Heart left ventricle (tissue), 16 donors: ENCODE measurements at regions of chr18 and their contacts with region 1.

Region 1: DNA sequence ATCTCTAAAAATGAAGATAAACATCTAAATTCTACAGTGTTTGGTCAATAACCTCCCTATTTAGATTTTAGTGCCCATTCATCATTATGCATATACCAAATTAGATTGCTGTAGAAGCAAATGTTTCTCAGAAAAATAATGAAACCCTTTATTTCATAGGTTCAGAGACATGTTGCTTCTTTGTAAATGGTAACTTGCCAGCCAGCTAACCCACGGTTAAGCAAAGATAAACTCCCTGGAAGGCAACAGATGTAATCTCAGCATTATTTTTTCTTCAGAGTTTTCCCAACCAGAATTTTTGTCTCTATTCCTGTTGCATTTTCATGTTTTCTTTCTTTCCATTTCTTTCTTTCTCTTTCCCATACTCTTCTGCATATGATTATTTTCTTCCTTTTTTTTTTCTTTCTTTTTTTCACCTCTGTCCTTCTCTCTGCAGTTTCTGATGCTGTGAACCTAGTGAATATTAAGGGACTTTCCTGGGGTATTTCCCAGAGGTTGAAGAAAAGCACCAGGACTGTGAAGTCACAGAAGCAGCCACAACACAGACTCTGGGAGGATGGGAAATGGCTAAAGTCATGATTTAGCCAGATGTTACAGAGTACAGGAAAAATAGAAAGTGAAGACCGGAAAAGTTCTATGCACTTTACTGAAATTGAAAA is 50.0 kb upstream of the DSG1 start:
- DNase-seq: no peak
- ATAC-seq: no peak
- H3K4me3 ChIP-seq: no peak overlapping the region
- H3K27ac ChIP-seq: no peak overlapping the region
- H3K4me1 ChIP-seq: peaks cover 0 to 18% (median 8%) of the 10 kb centered on the region in 12 donors
- H3K27me3 ChIP-seq: no peaks in the 10 kb centered on the region
- CTCF ChIP-seq: no peak
- POLR2A ChIP-seq: no peak

Region 2: GRCh38 chr18:31399306-31400032 is 131.5 kb after region 1 on chr18:
- intact Hi-C with region 1: loop called in 3 of 10 experiments (anchors 10 kb)
- DNase-seq: no peak
- ATAC-seq: no peak
- H3K4me3 ChIP-seq: no peak overlapping the region
- H3K27ac ChIP-seq: no peak overlapping the region
- H3K4me1 ChIP-seq: peaks cover 0 to 18% (median 10%) of the 10 kb centered on the region in 12 donors
- H3K27me3 ChIP-seq: no peaks in the 10 kb centered on the region
- CTCF ChIP-seq: no peak
- POLR2A ChIP-seq: no peak

Region 3: DNA sequence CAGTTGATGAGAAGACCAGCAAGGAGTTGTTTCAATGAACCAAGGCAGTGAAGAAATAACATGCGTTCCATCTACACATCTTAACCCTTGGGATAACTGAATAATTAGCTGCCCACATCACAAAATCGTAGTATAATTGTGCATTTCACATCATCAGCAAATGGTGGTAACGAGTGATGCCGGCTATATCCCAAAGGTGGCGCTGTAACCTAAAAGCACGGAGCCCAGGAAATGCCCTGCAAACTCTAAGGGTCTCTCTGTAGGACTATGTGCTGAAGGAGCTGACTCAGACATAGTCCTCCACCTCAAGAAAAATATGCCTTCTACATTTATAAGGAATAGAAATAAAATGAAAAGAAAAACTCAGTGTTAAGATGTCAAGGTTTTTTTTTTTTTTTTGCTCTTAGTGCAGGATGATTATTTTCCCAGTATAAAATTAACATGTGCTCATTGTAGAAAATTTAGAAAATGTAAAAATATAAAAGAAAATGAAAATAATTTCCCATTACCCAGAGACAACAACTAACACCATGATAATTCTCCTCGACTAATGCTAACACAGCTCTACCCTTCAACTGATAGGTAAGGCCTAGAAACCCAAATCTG is 156.5 kb after region 1 on chr18:
- intact Hi-C with region 1: loop called in 1 of 10 experiments (anchors 10 kb)
- DNase-seq: no peak
- ATAC-seq: no peak
- H3K4me3 ChIP-seq: no peak overlapping the region
- H3K27ac ChIP-seq: no peak overlapping the region
- H3K4me1 ChIP-seq: no peaks in the 10 kb centered on the region
- H3K27me3 ChIP-seq: no peaks in the 10 kb centered on the region
- CTCF ChIP-seq: peak in 11 of 12 donors; percentile 15 to 60 (median 38)
- POLR2A ChIP-seq: no peak

Region 4: GRCh38 chr18:31497837-31498573 is 230.1 kb after region 1 on chr18 and contains the start of gene DSG2:
- intact Hi-C with region 1: loop called in 5 of 10 experiments (anchors 5 to 10 kb)
- DNase-seq: peak; percentile 62 to 79 (median 78)
- ATAC-seq: peak; percentile 90 to 97 (median 96)
- H3K4me3 ChIP-seq: peak within 1 kb of the TSS; percentile 52 to 76 (median 68)
- H3K27ac ChIP-seq: peak within 1 kb of the TSS; percentile 52 to 84 (median 71)
- H3K4me1 ChIP-seq: peaks cover 0 to 19% (median 0%) of the 10 kb centered on the region in 12 donors
- H3K27me3 ChIP-seq: peaks cover 0 to 30% (median 0%) of the 10 kb centered on the region in 9 donors
- CTCF ChIP-seq: no peak
- POLR2A ChIP-seq: no peak
- total RNA-seq, gene DSG2: 36.0 to 54.4 (median 41.4) TPM

Region 5: DNA sequence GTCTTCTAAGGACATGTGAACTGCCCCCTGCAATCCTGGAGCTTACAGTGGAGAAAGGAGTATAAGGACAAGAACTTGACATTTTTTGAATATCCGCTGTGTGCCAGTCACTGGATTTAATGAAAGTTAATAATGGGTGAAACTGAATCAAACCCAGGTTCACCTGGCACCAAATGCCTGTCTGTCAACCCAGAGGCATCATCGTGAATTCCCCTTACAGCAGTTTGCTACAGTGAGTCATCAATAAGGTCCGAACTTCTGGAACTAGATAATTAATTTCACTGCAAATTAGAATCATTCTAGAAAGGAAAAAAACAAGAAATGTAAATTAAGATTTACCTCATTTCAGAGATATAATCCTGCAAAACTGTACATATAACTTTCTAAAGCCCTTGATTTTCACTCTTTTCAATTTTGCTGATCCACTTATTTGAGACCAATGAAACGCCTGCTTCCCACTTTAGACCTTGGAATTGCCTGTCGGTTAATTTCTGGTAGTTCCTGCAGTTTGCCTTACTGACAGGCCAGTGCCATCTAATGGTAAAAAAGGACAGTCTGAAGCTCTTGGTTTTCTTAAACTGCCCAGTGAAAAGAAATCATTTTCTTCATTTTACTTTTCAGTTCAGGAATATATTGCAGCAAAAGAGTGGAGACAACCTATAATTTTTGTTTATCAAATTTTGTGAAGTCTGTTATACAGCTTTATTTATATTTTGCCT is 238.2 kb after region 1 on chr18:
- intact Hi-C with region 1: loop called in 3 of 10 experiments (anchors 5 to 10 kb)
- DNase-seq: no peak
- ATAC-seq: no peak
- H3K4me3 ChIP-seq: no peak overlapping the region
- H3K27ac ChIP-seq: no peak overlapping the region
- H3K4me1 ChIP-seq: peaks cover 0 to 6% (median 0%) of the 10 kb centered on the region in 12 donors
- H3K27me3 ChIP-seq: no peaks in the 10 kb centered on the region
- CTCF ChIP-seq: peak; percentile 15 to 65 (median 50)
- POLR2A ChIP-seq: no peak

Region 6: GRCh38 chr18:31512203-31512764 is 244.3 kb after region 1 on chr18:
- intact Hi-C with region 1: loop called in 3 of 10 experiments (anchors 5 to 10 kb)
- DNase-seq: no peak
- ATAC-seq: peak in 3 of 4 donors; percentile 60 to 69 (median 62)
- H3K4me3 ChIP-seq: no peak overlapping the region
- H3K27ac ChIP-seq: no peak overlapping the region
- H3K4me1 ChIP-seq: peaks cover 0 to 18% (median 0%) of the 10 kb centered on the region in 12 donors
- H3K27me3 ChIP-seq: no peaks in the 10 kb centered on the region
- CTCF ChIP-seq: no peak
- POLR2A ChIP-seq: no peak